Activated naive CD4-positive, alpha-beta T cell treated with anti-CD3 and anti-CD28 coated beads for 36 hours (primary cell): ENCODE measurements at regions of chr20 and their contacts with region 1.

Region 1: DNA sequence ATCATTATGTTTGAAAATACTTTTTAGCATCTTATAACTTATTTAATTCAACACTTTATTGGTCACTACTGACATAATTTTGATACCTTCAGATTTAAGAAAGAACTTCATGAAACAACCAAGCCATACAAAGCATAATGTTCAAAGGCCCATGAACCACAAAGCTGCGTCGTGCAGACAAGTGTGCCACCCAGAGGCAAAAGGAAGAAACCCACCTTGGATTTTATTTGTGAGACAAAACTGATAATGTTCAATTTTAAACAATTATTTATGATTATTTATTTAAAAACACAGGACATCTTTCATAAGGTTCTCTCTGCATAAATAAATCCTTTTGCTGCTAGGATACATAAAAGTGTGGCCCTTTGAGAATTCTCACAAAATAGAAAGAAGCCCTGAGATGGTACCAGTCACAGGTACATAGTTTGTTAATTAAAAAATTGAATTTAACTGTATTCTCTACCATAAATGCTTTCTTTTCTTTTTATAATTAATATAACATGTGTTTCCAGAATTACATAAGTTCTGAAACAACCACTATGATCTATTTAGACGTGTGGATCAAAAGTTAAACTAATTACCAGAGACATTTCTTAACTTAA is 143.7 kb downstream of the RALGAPA2 start:
- DNase-seq: peak; percentile 54
- H3K4me3 Mint-ChIP-seq: no peak overlapping the region
- H3K27ac Mint-ChIP-seq: no peak overlapping the region
- H3K4me1 Mint-ChIP-seq: no peaks in the 10 kb centered on the region
- H3K27me3 Mint-ChIP-seq: no peaks in the 10 kb centered on the region

Region 2: DNA sequence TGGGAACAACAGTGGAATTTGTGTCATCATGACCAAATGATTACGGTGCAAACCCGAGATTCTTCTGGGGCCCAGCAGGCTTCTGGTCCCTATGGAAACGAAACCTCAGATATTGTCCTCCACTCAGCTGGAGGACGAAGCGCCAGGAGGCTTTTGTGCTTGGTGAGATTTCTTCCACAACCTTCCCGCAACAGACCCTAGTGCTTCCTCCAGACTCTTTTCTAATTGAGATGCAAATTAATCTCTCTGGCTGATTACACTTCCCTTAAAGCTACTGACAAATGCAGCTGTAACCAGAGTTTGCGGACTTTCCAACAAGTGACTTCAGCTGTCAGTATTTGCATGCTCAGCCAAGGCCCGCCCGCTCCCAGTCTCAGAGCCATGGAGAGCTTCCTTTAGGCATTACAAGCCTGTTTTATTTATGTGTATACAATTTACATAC is 104.8 kb before region 1 on chr20:
- CTCF ChIA-PET with region 1: no interaction called
- intact Hi-C with region 1: loop called (anchors 2 kb)
- DNase-seq: no peak
- H3K4me3 Mint-ChIP-seq: no peak overlapping the region
- H3K27ac Mint-ChIP-seq: no peak overlapping the region
- H3K4me1 Mint-ChIP-seq: no peaks in the 10 kb centered on the region
- H3K27me3 Mint-ChIP-seq: no peaks in the 10 kb centered on the region